WTC11 (cell line): ENCODE measurements at regions of chr12 and their contacts with region 1.

Region 1: DNA sequence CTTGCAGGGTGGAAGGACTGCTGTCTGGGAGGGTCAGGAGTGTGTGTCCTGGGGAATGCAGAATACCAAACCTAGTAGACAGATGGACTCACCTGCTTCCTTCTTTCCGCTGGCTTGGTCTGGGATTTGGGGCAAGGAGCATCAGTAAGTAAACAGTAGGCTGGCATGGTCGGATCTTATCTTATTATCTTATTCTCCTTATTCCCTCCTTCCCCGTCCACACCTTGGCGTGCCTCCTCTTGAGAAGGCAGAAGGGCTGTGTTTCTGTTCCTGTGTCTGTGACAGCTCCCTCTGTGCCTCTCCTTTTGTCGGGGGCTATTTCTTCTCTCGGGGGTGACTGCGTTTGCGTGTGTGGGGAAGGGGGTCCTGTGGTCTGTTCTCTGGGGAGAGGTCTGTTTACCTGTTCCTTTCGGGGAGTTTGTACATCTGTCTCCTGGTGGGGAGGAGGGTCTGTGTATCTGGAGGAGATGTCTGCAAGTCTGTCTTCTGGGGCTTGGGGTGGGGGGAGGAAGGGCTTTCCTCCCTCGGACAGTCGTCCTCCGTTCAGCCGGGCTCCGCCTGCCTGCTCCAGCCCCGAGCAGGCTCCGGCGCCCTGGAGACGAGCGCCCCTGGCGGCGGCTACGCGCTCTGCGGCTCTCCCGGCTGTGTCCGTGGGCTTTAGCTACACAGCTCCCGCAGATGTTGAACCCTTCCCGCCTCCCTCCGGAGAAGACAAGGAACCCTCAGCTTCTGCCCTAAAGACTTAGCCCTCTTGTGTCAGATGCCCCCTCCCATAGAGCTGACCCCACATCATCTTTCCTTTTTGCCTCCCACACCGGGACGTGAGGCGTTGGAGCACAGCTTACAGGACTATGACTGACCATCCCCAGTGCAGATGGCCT is 4.3 kb downstream of the KRT86 start:
- DNase-seq: peak; percentile 87
- ATAC-seq: peak; percentile 99
- H3K4me3 Mint-ChIP-seq: peak overlapping the region; percentile 74
- H3K27ac Mint-ChIP-seq: no peak overlapping the region
- H3K4me1 Mint-ChIP-seq: peaks cover 5% of the 10 kb centered on the region
- H3K27me3 Mint-ChIP-seq: peaks cover 20% of the 10 kb centered on the region
- CTCF ChIP-seq: peak; percentile 97

Region 2: GRCh38 chr12:52181746-52182145 is 97.0 kb before region 1 on chr12:
- CTCF ChIA-PET with region 1: interaction called, 15 read pairs
- POLR2A ChIA-PET with region 1: no interaction called
- DNase-seq: peak; percentile 36
- ATAC-seq: peak; percentile 68
- H3K4me3 Mint-ChIP-seq: no peak overlapping the region
- H3K27ac Mint-ChIP-seq: peak overlapping the region; percentile 69; the same call in 1 of the 2 replicates
- H3K4me1 Mint-ChIP-seq: peaks cover 32% of the 10 kb centered on the region
- H3K27me3 Mint-ChIP-seq: no peaks in the 10 kb centered on the region; the same call in 1 of the 2 replicates
- CTCF ChIP-seq: no peak

Region 3: DNA sequence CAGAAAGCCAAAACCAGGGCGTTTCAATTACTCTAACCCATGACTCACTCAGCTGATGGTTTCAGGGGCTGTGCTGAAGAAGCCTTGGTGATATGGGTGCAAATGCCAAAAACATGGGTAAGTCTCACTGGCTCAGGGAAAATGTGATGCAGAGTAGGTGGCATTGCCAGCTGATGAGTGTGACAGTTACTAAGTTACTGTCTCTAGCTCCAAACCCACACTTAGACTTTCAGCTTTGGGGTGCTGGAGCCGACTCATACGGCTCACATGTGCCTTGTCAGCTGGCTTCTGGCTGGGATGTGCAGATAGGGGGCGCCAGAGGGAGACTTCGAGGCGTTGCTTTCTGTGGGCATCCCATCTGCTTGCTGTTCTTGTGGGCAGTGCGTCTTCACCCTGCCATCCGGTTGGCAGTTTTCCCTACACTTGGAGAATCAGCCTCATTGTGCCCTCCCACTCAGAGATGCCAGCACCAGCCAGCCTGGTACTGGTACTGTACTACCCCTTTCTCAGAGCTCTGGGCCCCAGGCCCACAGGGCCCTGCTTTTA is 56.8 kb before region 1 on chr12:
- CTCF ChIA-PET with region 1: interaction called, 67 read pairs
- POLR2A ChIA-PET with region 1: no interaction called
- DNase-seq: peak; percentile 93
- ATAC-seq: peak; percentile 91
- H3K4me3 Mint-ChIP-seq: no peak overlapping the region
- H3K27ac Mint-ChIP-seq: no peak overlapping the region
- H3K4me1 Mint-ChIP-seq: peaks cover 5% of the 10 kb centered on the region; the same call in 1 of the 2 replicates
- H3K27me3 Mint-ChIP-seq: peaks cover 8% of the 10 kb centered on the region
- CTCF ChIP-seq: peak; percentile 87

Region 4: DNA sequence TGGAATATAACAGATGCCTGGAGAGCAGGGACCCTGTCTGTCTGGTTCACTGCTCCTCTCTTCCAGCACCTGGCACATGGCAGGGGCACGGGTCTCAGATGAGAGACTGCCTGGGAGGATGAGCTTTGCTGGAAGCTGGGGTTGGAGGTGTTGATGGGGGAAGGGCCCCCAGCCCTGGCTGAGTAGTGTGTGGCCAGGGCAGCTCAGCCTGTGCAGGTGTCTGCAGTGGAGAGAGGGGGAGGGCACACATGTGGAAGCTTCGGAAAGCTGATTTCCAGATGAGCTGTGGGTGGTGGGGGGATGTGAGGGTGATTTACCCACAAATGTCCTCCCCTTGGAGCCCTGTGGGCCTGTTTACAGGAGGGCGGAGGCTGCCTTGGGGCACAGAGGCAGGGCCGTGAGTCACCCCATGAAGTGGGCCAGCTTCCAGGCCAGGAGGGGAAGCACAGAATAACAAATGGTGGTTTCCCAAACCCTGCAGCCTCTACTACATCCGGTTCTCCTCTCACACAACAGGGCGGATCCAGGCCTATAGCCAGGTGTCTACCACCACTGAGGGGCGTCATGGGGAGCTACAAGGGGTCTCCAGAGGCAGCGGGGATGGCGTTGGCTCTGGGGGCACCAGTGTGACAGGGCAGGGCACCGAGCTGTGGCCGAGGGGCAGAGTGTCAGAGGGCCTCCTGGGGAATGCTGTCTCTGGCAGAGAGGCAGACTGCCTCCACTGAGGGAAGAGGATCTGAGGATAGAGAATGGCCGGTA is 34.7 kb before region 1 on chr12:
- CTCF ChIA-PET with region 1: interaction called, 48 read pairs
- POLR2A ChIA-PET with region 1: interaction called, 5 read pairs
- DNase-seq: no peak
- ATAC-seq: no peak
- H3K4me3 Mint-ChIP-seq: no peak overlapping the region
- H3K27ac Mint-ChIP-seq: no peak overlapping the region
- H3K4me1 Mint-ChIP-seq: peaks cover 36% of the 10 kb centered on the region
- H3K27me3 Mint-ChIP-seq: peaks cover 9% of the 10 kb centered on the region
- CTCF ChIP-seq: no peak

Region 5: DNA sequence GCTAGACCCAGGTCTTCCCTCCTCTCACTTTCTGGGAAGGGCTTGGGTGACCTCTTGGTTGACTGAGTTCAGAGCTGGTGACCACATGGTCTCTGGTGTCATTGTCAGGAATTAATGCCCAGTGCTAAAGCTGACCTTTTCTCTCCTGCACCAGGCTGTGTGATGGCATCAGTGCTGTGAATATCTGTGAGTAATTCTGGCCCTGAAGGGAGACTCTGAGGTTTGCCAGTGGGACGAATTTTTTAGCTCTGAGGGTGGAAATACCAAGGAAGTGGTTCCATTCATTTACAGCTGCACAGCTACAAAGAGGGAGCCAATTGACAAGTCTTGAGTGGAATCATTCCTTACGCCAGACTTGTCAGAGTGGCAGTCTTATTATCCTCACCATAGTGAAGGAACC is 10.6 kb before region 1 on chr12:
- CTCF ChIA-PET with region 1: interaction called, 122 read pairs
- POLR2A ChIA-PET with region 1: interaction called, 4 read pairs
- DNase-seq: no peak
- ATAC-seq: no peak
- H3K4me3 Mint-ChIP-seq: no peak overlapping the region
- H3K27ac Mint-ChIP-seq: no peak overlapping the region
- H3K4me1 Mint-ChIP-seq: no peaks in the 10 kb centered on the region
- H3K27me3 Mint-ChIP-seq: no peaks in the 10 kb centered on the region; the same call in 1 of the 2 replicates
- CTCF ChIP-seq: no peak

Region 6: GRCh38 chr12:52319097-52319496 is 40.3 kb after region 1 on chr12:
- CTCF ChIA-PET with region 1: interaction called, 23 read pairs
- POLR2A ChIA-PET with region 1: no interaction called
- DNase-seq: peak; percentile 27
- ATAC-seq: peak; percentile 47
- H3K4me3 Mint-ChIP-seq: no peak overlapping the region
- H3K27ac Mint-ChIP-seq: no peak overlapping the region
- H3K4me1 Mint-ChIP-seq: no peaks in the 10 kb centered on the region
- H3K27me3 Mint-ChIP-seq: peaks cover 5% of the 10 kb centered on the region; the same call in 1 of the 2 replicates
- CTCF ChIP-seq: no peak

Region 7: GRCh38 chr12:52454411-52455216 is 175.8 kb after region 1 on chr12:
- CTCF ChIA-PET with region 1: no interaction called
- POLR2A ChIA-PET with region 1: no interaction called
- DNase-seq: no peak
- ATAC-seq: peak; percentile 62
- H3K4me3 Mint-ChIP-seq: no peak overlapping the region
- H3K27ac Mint-ChIP-seq: peak overlapping the region; percentile 42; the same call in 1 of the 2 replicates
- H3K4me1 Mint-ChIP-seq: peaks cover 14% of the 10 kb centered on the region
- H3K27me3 Mint-ChIP-seq: no peaks in the 10 kb centered on the region; the same call in 1 of the 2 replicates
- CTCF ChIP-seq: no peak

Region 8: DNA sequence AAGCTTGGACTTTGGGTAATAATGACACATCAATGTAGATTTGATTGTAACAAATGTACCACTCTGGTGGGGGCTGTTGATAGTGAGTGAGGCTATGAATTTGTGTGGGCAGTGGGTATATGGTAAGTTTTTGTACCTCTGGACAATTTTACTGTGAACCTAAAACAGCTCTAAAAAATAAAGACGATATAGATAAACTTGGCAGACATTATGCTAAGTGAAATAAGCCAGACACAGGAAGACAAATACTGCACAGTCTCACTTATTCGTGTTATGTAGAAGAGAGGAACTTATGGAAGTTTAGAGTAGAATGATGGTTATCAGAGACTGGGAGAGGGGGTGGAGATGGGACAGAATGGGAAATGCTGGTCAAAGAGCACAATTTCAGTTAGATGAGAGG is 186.1 kb after region 1 on chr12:
- CTCF ChIA-PET with region 1: no interaction called
- POLR2A ChIA-PET with region 1: no interaction called
- DNase-seq: no peak
- ATAC-seq: no peak
- H3K4me3 Mint-ChIP-seq: no peak overlapping the region
- H3K27ac Mint-ChIP-seq: no peak overlapping the region
- H3K4me1 Mint-ChIP-seq: no peaks in the 10 kb centered on the region
- H3K27me3 Mint-ChIP-seq: no peaks in the 10 kb centered on the region; the same call in 1 of the 2 replicates
- CTCF ChIP-seq: no peak